CD14-positive monocyte (primary cell): ENCODE measurements at regions of chr10 and their contacts with region 1.

Region 1: DNA sequence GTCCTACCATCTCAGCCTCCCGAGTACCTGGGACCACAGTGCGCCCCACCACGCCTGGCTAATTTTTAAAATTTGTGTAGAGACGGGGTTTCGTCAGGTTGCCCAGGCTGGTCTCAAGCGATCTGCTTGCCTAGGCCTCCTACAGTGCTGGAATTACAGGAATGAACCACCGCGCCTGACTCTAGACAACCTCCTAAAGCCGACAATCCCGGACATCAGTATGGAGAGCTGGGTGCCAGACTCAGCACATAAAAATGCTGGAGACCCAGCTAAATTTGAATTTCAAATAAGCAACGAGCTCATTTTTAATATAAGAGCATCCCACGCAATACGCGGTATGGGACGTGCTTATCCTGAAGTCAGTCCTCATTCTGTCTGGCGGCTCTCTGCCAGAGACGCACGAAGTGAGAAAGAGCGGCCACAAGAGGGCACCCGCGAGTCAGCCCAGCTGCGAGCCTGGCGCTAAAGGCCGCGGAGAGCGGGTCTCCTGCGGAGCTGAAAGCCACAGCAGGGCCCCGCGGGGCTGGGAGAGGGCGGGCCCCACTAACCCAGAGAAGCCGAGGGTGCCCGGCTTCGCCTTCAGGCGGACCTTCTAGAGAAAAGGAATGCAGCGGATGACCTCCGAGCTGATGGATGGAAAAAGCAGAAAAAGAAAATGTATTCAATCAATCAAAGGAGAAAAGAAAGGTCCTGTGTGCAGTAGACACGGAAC is 7.0 kb downstream of the CALY start:
- DNase-seq: peak; percentile 69 to 79 (median 75)
- H3K4me3 ChIP-seq: no peak overlapping the region
- H3K4me3 Mint-ChIP-seq: peak overlapping the region in 1 of 2 donors; percentile 78
- H3K27ac ChIP-seq: no peak overlapping the region
- H3K27ac Mint-ChIP-seq: peak overlapping the region in 1 of 7 donors; percentile 41
- H3K4me1 ChIP-seq: peaks cover 4 to 15% of the 10 kb centered on the region in 2 donors
- H3K4me1 Mint-ChIP-seq: peaks cover 5% of the 10 kb centered on the region
- H3K27me3 ChIP-seq: peaks cover 27 to 82% of the 10 kb centered on the region in 2 donors
- H3K27me3 Mint-ChIP-seq: peaks cover 80 to 89% (median 87%) of the 10 kb centered on the region in 3 donors
- CTCF ChIP-seq: peak; percentile 97

Region 2: GRCh38 chr10:132961787-132962622 is 367.6 kb before region 1 on chr10:
- intact Hi-C with region 1: loop called in 1 of 2 experiments (anchors 10 kb)
- DNase-seq: peak; percentile 56 to 65 (median 65)
- H3K4me3 ChIP-seq: peak overlapping the region; percentile 45 to 76 (median 49)
- H3K4me3 Mint-ChIP-seq: peak overlapping the region; percentile 97 to 99
- H3K27ac ChIP-seq: no peak overlapping the region
- H3K27ac Mint-ChIP-seq: peak overlapping the region in 4 of 7 donors; percentile 11 to 69 (median 65)
- H3K4me1 ChIP-seq: peaks cover 5 to 14% of the 10 kb centered on the region in 2 donors
- H3K4me1 Mint-ChIP-seq: peaks cover 16% of the 10 kb centered on the region
- H3K27me3 ChIP-seq: peaks cover 7 to 44% of the 10 kb centered on the region in 2 donors
- H3K27me3 Mint-ChIP-seq: peaks cover 37 to 62% (median 60%) of the 10 kb centered on the region in 3 donors
- CTCF ChIP-seq: no peak

Region 3: GRCh38 chr10:133520155-133520738 is 190.6 kb after region 1 on chr10:
- intact Hi-C with region 1: loop called (anchors 5 to 10 kb)
- DNase-seq: peak; percentile 46 to 76 (median 71)
- H3K4me3 ChIP-seq: peak overlapping the region; percentile 20 to 68 (median 38)
- H3K4me3 Mint-ChIP-seq: peak overlapping the region; percentile 59 to 77
- H3K27ac ChIP-seq: no peak overlapping the region
- H3K27ac Mint-ChIP-seq: no peak overlapping the region
- H3K4me1 ChIP-seq: peaks cover 9 to 10% of the 10 kb centered on the region in 2 donors
- H3K4me1 Mint-ChIP-seq: peaks cover 11% of the 10 kb centered on the region
- H3K27me3 ChIP-seq: peaks cover 0 to 14% of the 10 kb centered on the region in 2 donors
- H3K27me3 Mint-ChIP-seq: peaks cover 12 to 41% (median 36%) of the 10 kb centered on the region in 3 donors
- CTCF ChIP-seq: peak; percentile 96